PC-9 (cell line): ENCODE measurements at regions of chr22 and their contacts with region 1.

Region 1: DNA sequence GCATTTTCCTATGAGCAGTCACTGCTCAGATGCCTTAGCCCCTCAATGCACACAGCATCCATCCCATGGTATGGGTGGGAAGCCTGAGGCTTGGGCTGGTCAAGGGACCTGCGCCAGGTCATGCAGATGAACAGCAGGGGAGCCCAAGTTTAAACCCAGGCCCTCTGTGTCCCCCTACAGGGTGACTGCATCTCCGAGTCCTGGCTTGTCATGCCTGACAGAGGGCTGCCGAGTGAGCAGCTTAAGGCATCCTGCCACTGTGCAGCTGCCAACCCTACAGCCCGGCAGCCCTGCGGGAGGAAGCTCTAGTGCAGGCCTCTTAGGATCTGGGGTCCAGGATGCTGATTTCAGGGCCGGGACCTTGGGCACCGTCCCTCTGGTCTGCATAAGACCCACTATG is 10.0 kb downstream of the IL2RB start:
- DNase-seq: no peak
- H3K4me3 ChIP-seq: no peak overlapping the region
- H3K27ac ChIP-seq: no peak overlapping the region
- H3K4me1 ChIP-seq: no peaks in the 10 kb centered on the region
- H3K27me3 ChIP-seq: no peaks in the 10 kb centered on the region; the same call in 1 of the 2 replicates
- CTCF ChIP-seq: no peak

Region 2: DNA sequence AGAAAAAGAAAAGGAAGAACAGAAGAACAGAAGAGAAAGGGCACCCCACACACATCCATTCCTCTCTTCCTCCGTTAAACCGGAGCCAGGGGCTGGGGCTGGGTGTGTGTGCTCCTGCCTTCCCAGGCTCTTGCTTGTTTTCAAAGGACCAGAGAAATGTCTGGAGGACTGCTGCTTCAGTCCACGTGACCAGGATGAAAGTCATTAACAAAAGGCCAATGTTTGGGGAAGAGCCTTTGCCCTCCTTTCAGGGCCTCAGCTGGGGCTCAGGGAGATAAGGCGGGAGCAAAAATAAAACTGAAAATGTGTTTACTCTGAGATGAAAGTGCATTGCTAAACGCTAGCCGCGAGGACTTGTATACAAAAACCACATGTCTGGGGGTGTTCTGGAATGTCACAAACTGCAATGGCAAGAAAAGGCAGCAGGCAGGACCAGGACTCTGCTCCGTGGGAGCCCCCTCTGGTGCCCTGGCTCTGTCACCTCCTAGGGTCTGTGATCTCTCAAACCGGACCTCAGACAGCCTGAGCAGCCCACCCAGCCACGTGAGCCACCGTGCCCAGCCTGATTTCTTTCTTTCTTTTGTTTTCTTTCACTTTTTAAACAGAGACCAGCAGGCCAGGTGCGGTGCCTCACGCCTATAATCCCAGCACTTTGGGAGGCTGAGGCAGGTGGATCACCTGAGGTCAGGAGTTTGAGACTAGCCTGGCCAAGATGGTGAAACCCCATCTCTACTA is 720.4 kb before region 1 on chr22:
- CTCF ChIA-PET with region 1: no interaction called
- POLR2A ChIA-PET with region 1: interaction called, 16 read pairs
- intact Hi-C with region 1: no loop called
- DNase-seq: peak; percentile 44 to 93
- H3K4me3 ChIP-seq: peak overlapping the region; percentile 35; the same call in 1 of the 2 replicates
- H3K27ac ChIP-seq: peak overlapping the region; percentile 66
- H3K4me1 ChIP-seq: peaks cover 43% of the 10 kb centered on the region
- H3K27me3 ChIP-seq: no peaks in the 10 kb centered on the region
- CTCF ChIP-seq: no peak